Transverse colon (tissue), 4 donors: ENCODE measurements at regions of chr14 and their contacts with region 1.

Region 1: GRCh38 chr14:26930576-26930975 is 332.7 kb upstream of the NOVA1 start:
- DNase-seq: no peak
- H3K4me3 ChIP-seq: no peak overlapping the region
- H3K27ac ChIP-seq: no peak overlapping the region
- H3K4me1 ChIP-seq: no peaks in the 10 kb centered on the region
- H3K27me3 ChIP-seq: no peaks in the 10 kb centered on the region
- CTCF ChIP-seq: no peak
- EP300 ChIP-seq: no peak
- POLR2A ChIP-seq: no peak

Region 2: GRCh38 chr14:26444822-26445221 is 485.8 kb before region 1 on chr14:
- in situ Hi-C with region 1: no loop called
- intact Hi-C with region 1: loop called (anchors 5 kb)
- DNase-seq: no peak
- H3K4me3 ChIP-seq: no peak overlapping the region
- H3K27ac ChIP-seq: no peak overlapping the region
- H3K4me1 ChIP-seq: no peaks in the 10 kb centered on the region
- H3K27me3 ChIP-seq: no peaks in the 10 kb centered on the region
- CTCF ChIP-seq: no peak
- EP300 ChIP-seq: no peak
- POLR2A ChIP-seq: no peak